GM13977 (cell line): ENCODE measurements at regions of chr4 and their contacts with region 1.

Region 1: GRCh38 chr4:52983563-52984303 is 121.6 kb downstream of the RASL11B start:
- DNase-seq: peak; percentile 54
- CTCF ChIP-seq: peak; percentile 57

Region 2: GRCh38 chr4:52376132-52376704 is 607.5 kb before region 1 on chr4:
- in situ Hi-C with region 1: loop called (anchors 10 kb)
- DNase-seq: peak; percentile 14
- CTCF ChIP-seq: peak; percentile 60

Region 3: GRCh38 chr4:52572936-52573485 is 410.7 kb before region 1 on chr4:
- in situ Hi-C with region 1: loop called (anchors 25 kb)
- DNase-seq: no peak
- CTCF ChIP-seq: no peak